Activated CD8-positive, alpha-beta T cell treated with anti-CD3 and anti-CD28 coated beads, Interleukin-2, amount 10 ng/mL, durations not matched to agents 7 days and 5 days (primary cell): ENCODE measurements at regions of chr2 and their contacts with region 1.

Region 1: GRCh38 chr2:102240640-102241370 is 54.0 kb downstream of the IL1RL2 start:
- DNase-seq: peak; percentile 92
- ATAC-seq: peak; percentile 97
- H3K4me3 Mint-ChIP-seq: peak overlapping the region; percentile 16
- H3K27ac Mint-ChIP-seq: peak overlapping the region; percentile 71
- H3K4me1 Mint-ChIP-seq: peaks cover 38% of the 10 kb centered on the region
- H3K27me3 Mint-ChIP-seq: no peaks in the 10 kb centered on the region

Region 2: GRCh38 chr2:101883863-101884262 is 356.9 kb before region 1 on chr2:
- CTCF ChIA-PET with region 1: interaction called, 51 read pairs
- POLR2A ChIA-PET with region 1: no interaction called
- DNase-seq: peak; percentile 44
- ATAC-seq: no peak
- H3K4me3 Mint-ChIP-seq: no peak overlapping the region
- H3K27ac Mint-ChIP-seq: no peak overlapping the region
- H3K4me1 Mint-ChIP-seq: no peaks in the 10 kb centered on the region
- H3K27me3 Mint-ChIP-seq: no peaks in the 10 kb centered on the region

Region 3: DNA sequence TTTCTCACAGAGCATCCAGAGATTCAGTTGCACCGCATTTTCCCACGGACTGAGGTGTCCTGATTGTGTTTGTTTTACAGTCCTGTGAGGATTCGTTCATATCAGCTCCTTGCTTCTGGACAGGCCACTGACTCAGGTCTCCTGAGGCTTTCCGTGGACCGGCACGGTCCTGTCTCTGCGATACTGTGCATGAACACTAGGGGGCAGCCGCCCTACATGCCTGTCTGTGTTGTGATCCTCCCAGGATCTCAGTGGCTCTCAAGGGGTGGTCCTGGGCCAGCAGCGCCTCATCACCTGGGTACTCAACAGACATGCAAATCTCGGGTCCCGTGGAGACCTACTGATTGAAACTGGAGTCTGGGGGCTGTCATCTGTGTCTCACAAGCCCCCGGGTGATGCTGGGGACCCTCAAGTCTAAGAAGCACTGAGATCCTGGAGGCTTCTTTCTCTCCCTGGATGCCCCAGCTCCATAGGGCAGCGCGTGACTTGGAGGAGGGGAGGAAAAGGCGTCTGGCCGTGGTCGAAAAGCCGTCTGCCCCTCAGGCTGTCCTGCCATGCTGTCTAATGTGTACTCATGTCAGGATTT is 220.1 kb before region 1 on chr2:
- CTCF ChIA-PET with region 1: interaction called, 82 read pairs
- POLR2A ChIA-PET with region 1: no interaction called
- DNase-seq: peak; percentile 86
- ATAC-seq: peak; percentile 86
- H3K4me3 Mint-ChIP-seq: no peak overlapping the region
- H3K27ac Mint-ChIP-seq: no peak overlapping the region
- H3K4me1 Mint-ChIP-seq: no peaks in the 10 kb centered on the region
- H3K27me3 Mint-ChIP-seq: peaks cover 5% of the 10 kb centered on the region

Region 4: DNA sequence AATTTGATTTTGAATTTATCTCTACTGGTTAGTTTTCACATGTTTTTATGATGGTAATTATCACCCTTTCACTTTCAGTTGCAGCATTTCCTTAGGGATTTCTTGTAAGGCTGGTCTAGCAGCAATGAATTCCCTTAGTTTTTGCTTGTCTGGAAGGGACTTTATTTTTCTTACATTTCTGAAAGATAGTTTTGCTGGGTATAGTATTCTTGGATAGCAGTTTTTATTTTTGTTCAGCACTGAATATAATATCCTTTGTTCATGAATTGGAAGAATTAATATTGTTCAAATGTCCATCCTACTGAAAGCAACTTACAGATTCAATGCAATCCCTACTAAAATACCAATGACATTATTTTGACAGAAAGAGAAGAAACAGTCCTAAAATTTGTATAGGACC is 23.8 kb before region 1 on chr2:
- CTCF ChIA-PET with region 1: interaction called, 30 read pairs
- POLR2A ChIA-PET with region 1: no interaction called
- DNase-seq: no peak
- ATAC-seq: no peak
- H3K4me3 Mint-ChIP-seq: no peak overlapping the region
- H3K27ac Mint-ChIP-seq: no peak overlapping the region
- H3K4me1 Mint-ChIP-seq: peaks cover 17% of the 10 kb centered on the region
- H3K27me3 Mint-ChIP-seq: peaks cover 3% of the 10 kb centered on the region

Region 5: GRCh38 chr2:102291318-102292251 is 50.8 kb after region 1 on chr2:
- CTCF ChIA-PET with region 1: interaction called, 11 read pairs
- POLR2A ChIA-PET with region 1: no interaction called
- DNase-seq: no peak
- ATAC-seq: peak; percentile 61
- H3K4me3 Mint-ChIP-seq: no peak overlapping the region
- H3K27ac Mint-ChIP-seq: peak overlapping the region; percentile 75
- H3K4me1 Mint-ChIP-seq: peaks cover 49% of the 10 kb centered on the region
- H3K27me3 Mint-ChIP-seq: no peaks in the 10 kb centered on the region

Region 6: DNA sequence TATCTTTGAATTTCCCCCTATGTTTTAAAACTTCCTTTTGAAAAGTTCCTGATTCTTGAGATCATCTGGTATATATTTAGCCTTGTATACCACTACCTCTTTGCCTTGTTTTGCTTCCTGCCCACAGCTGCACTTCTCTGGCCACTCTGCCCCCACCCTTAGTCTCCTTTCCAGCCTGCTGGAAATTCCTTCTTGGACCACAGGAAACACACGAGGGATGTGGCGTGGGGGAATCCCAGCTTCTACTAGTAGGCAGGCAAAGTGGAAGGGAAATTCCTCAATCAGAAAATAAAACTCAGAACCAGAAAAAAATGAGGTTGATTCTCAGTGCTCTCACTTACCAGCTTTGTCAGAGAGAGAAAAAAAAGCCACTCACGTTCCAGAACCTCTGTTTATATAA is 195.5 kb after region 1 on chr2:
- CTCF ChIA-PET with region 1: interaction called, 24 read pairs
- POLR2A ChIA-PET with region 1: no interaction called
- DNase-seq: no peak
- ATAC-seq: peak; percentile 19
- H3K4me3 Mint-ChIP-seq: no peak overlapping the region
- H3K27ac Mint-ChIP-seq: peak overlapping the region; percentile 47
- H3K4me1 Mint-ChIP-seq: peaks cover 45% of the 10 kb centered on the region
- H3K27me3 Mint-ChIP-seq: no peaks in the 10 kb centered on the region

Region 7: DNA sequence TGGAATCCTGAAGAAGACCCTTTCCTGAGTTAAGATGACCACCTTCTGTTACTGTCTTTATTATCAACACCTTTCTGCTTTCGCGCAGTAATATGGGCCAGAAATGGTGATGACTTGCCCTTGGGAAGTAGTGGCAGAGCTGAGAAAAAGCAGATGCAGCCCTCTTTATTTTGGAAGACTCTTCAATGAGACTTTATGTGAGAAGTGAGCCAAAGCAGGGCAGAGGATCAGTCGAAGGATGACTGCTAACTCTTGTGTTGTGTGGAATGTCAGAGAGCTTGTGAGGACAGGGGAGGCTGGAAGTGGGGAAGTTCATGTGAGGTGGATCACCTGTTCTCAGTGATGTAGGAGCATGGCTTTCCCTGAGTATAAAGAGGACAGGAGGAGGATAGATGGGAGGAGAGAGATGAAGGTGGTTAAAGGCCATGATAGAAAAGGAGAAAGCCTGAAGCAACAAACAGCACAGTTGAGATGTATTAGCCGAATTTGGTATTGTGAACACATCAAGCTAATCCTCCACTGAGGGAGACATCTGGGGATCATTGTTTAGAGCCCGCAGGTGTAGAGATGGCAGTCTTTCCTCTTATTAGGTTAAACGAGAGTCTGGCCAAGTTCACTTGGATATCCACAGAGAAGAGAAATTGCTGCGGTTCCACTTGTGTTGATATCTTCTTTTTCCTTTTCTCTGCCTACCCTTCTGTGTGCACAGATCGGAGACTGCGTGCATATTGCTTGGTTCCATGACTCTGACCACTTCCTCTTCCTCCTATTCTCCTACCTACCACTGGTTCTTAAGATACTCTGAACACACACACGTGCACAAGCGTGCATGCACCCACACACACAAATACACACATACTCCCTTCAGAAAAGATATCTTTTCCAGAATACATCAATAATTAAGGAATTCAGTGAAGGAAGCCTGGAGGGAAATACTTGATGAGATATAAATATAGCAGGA is 446.0 kb after region 1 on chr2:
- CTCF ChIA-PET with region 1: no interaction called
- POLR2A ChIA-PET with region 1: no interaction called
- DNase-seq: peak; percentile 44
- ATAC-seq: peak; percentile 91
- H3K4me3 Mint-ChIP-seq: no peak overlapping the region
- H3K27ac Mint-ChIP-seq: no peak overlapping the region
- H3K4me1 Mint-ChIP-seq: no peaks in the 10 kb centered on the region
- H3K27me3 Mint-ChIP-seq: peaks cover 8% of the 10 kb centered on the region

Region 8: GRCh38 chr2:102761763-102762162 is 521.0 kb after region 1 on chr2 and contains the start of gene TMEM182:
- CTCF ChIA-PET with region 1: no interaction called
- POLR2A ChIA-PET with region 1: no interaction called
- DNase-seq: no peak
- ATAC-seq: no peak
- H3K4me3 Mint-ChIP-seq: no peak within 1 kb of the TSS
- H3K27ac Mint-ChIP-seq: no peak within 1 kb of the TSS
- H3K4me1 Mint-ChIP-seq: peaks cover 3% of the 10 kb centered on the region
- H3K27me3 Mint-ChIP-seq: no peaks in the 10 kb centered on the region
- total RNA-seq, gene TMEM182: 3.1 to 4.4 TPM